ENCODE measurements at regions of chrX and their contacts with region 1.

Region 1: GRCh38 chrX:70133303-70134115 is at the start of gene IGBP1:
- DNase-seq: peak; percentile 41
- H3K4me3 ChIP-seq: peak within 1 kb of the TSS; percentile 73
- H3K27me3 ChIP-seq: no peaks in the 10 kb centered on the region
- CTCF ChIP-seq: peak; percentile 73
- polyA plus RNA-seq, gene IGBP1: 68.3 and 86.4 TPM in 2 replicates

Region 2: GRCh38 chrX:69189576-69190371 is 943.7 kb before region 1 on chrX:
- CTCF ChIA-PET with region 1: no interaction called
- POLR2A ChIA-PET with region 1: no interaction called
- DNase-seq: no peak
- H3K4me3 ChIP-seq: no peak overlapping the region
- H3K27me3 ChIP-seq: no peaks in the 10 kb centered on the region; the same call in 1 of the 2 replicates
- CTCF ChIP-seq: no peak

Region 3: DNA sequence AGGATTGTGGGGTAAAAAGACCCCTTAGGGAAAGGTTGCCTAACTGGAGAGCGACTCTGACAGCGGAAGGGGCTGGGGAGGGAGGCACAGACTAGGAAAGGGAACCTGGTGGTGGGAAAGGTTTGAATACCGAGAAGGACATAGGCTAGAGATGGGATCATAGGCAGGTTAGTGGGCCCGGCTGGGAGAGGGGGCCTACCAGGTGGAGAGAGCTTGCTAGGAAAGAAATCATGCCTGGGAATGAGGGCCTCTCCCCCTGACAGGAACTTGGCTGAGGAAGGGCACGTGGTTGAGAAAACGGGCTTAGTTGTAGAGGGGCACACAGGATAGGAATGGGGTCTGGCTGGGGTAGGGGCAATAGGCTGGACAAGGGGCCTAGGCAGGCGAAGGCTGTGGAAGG is 66.9 kb before region 1 on chrX:
- CTCF ChIA-PET with region 1: no interaction called
- POLR2A ChIA-PET with region 1: no interaction called
- DNase-seq: no peak
- H3K4me3 ChIP-seq: no peak overlapping the region
- H3K27me3 ChIP-seq: no peaks in the 10 kb centered on the region
- CTCF ChIP-seq: no peak

Region 4: GRCh38 chrX:70117713-70118112 is 15.8 kb before region 1 on chrX:
- CTCF ChIA-PET with region 1: interaction called, 10 read pairs
- POLR2A ChIA-PET with region 1: no interaction called
- DNase-seq: no peak
- H3K4me3 ChIP-seq: no peak overlapping the region
- H3K27me3 ChIP-seq: no peaks in the 10 kb centered on the region
- CTCF ChIP-seq: no peak

Measured in BJ (cell line).